ENCODE measurements at regions of chr7 and their contacts with region 1.

Region 1: DNA sequence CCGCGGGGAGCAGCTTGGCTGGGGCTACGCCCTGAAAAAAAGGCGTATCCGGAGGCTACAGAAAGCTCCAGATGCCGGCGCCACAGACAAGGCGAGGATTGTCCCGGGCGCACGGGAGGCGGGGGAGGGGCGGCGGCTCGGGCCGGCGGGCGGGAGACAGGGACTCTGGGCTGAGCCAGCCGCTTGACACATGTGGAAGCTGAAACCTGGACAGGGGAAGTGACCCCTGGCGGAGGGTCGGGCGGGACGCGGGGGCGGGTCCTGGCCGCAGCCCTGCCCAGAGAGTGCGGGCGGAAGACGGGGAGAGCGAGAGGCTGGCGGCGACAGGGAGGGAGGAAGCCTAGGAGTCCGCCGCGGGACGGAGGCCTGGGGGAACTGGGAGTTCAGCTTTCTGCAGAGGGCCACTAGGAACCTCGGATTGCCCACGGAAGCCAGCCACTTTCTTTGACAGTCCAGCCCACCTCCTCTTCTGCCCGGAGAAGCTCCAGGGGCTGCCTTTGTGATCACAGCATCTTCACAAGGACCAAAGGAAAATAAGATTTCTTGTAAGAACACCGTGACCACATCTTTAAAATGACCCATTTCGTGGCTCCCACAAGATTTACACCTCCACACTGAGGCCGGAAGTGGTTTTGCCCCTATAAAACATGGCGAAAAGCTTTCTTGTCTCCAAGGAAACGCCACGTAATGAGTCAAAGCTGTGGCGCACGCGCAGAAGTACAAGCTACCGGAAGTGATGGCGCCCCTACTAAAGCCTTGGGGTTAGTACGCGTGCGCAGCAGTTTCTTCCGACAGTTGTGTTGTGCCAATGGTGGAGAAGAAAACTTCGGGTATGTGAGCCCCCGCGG is at the starts of genes PLOD3 and ZNHIT1:
- DNase-seq: peak; percentile 93 to 99 (median 94)
- H3K4me3 ChIP-seq: peak within 1 kb of the TSS; percentile 82
- H3K4me3 Mint-ChIP-seq: peak within 1 kb of the TSS; percentile 90 to 98 (median 97)
- H3K27ac ChIP-seq: peak within 1 kb of the TSS; percentile 76
- H3K27ac Mint-ChIP-seq: peak within 1 kb of the TSS; percentile 95 to 97 (median 96)
- H3K4me1 ChIP-seq: peaks cover 25% of the 10 kb centered on the region
- H3K4me1 Mint-ChIP-seq: peaks cover 31 to 55% (median 50%) of the 10 kb centered on the region in 3 donors
- H3K27me3 ChIP-seq: no peaks in the 10 kb centered on the region
- H3K27me3 Mint-ChIP-seq: peaks cover 0 to 4% of the 10 kb centered on the region in 2 donors
- total RNA-seq, gene PLOD3: 41.3 to 45.4 TPM
- total RNA-seq, gene ZNHIT1: 50.6 to 51.7 TPM

Region 2: DNA sequence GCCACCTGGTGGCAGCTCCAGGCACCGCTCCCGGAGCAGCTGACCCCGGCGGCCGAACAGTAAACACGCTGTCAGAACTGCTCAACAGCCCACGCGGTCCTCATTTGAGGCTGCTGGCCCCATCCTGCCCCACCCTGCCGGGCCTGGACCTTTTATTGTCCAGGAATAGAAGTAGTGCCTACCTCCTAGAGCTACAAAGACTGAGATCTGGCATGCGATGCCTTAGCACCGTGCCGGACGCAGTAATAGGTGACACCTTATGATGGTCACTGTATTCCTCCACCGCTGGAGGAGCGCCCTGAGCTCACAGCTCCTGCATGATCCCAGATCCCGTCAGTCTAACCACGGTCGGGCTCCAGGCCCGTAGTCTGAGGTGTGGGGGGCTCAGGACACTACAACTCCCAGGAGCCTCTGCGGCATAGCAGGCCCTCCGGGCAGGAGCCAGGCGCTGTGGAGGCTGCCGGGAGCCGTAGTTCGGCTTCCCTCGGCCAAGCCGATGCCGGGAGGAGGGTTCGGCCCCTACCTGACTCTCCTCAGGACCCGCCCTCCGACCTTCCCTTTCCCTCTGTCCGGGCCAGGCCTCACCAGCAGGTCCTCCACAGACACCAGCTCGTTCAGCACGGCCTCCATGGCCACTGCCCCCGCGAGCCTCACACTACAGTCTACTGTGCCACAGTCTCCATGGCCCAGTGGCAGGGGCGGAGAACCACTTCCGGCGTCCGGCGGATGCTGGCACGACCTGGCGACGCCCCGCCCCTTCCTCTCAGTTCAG is 26.9 kb after region 1 on chr7 and contains the start of gene FIS1:
- CTCF ChIA-PET with region 1: interaction called, 69 read pairs
- POLR2A ChIA-PET with region 1: interaction called, 28 read pairs
- DNase-seq: peak; percentile 91 to 95 (median 92)
- H3K4me3 ChIP-seq: peak within 1 kb of the TSS; percentile 95
- H3K4me3 Mint-ChIP-seq: peak within 1 kb of the TSS; percentile 97 to 99 (median 98)
- H3K27ac ChIP-seq: peak within 1 kb of the TSS; percentile 91
- H3K27ac Mint-ChIP-seq: peak within 1 kb of the TSS; percentile 93 to 99 (median 97)
- H3K4me1 ChIP-seq: peaks cover 27% of the 10 kb centered on the region
- H3K4me1 Mint-ChIP-seq: peaks cover 30 to 60% (median 40%) of the 10 kb centered on the region in 3 donors
- H3K27me3 ChIP-seq: no peaks in the 10 kb centered on the region
- H3K27me3 Mint-ChIP-seq: peaks cover 0 to 2% of the 10 kb centered on the region in 2 donors
- total RNA-seq, gene FIS1: 137 to 139 TPM

Region 3: GRCh38 chr7:101251871-101252659 is 34.5 kb after region 1 on chr7:
- CTCF ChIA-PET with region 1: interaction called, 5 read pairs
- POLR2A ChIA-PET with region 1: interaction called, 12 read pairs
- DNase-seq: peak; percentile 97 to 99 (median 98)
- H3K4me3 ChIP-seq: peak overlapping the region; percentile 100
- H3K4me3 Mint-ChIP-seq: peak overlapping the region; percentile 95 to 100 (median 99)
- H3K27ac ChIP-seq: peak overlapping the region; percentile 80
- H3K27ac Mint-ChIP-seq: peak overlapping the region; percentile 88 to 100 (median 98)
- H3K4me1 ChIP-seq: peaks cover 16% of the 10 kb centered on the region
- H3K4me1 Mint-ChIP-seq: peaks cover 26 to 40% (median 35%) of the 10 kb centered on the region in 3 donors
- H3K27me3 ChIP-seq: no peaks in the 10 kb centered on the region
- H3K27me3 Mint-ChIP-seq: peaks cover 3 to 8% of the 10 kb centered on the region in 2 donors

Region 4: DNA sequence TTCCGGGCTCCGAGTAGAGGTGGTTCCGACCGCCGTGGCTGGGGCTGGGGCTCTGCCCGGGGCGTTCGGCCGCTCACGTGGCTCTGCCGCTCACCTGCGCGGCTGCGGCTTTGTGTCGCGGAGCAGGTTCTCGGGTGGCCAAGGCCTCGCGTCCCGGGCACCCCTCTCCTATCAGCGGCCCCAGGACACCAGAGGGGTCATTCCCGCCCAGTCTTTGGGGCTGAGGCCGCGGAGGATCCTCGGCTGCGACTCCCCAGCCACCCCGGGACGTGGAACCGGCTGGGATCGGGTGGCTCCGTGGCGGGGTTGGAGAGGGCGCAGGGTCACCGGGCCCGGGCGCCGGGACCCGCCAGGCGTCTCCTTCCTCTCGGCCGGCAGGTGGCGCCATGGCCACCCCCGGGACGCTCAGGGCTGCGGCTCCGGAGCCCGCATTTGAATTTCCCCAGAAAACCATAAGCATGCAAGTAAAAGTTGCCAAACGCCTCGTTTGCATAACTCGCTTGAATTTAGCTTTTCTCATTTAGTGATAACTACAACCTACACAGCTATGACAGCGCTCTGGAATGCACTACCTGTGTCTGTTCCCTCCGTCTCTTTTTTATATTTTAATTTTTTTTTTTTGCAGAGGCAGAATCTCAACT is 146.2 kb after region 1 on chr7:
- CTCF ChIA-PET with region 1: no interaction called
- POLR2A ChIA-PET with region 1: no interaction called
- DNase-seq: peak; percentile 36 to 70 (median 51)
- H3K4me3 ChIP-seq: peak overlapping the region; percentile 45
- H3K4me3 Mint-ChIP-seq: peak overlapping the region in 6 of 7 donors; percentile 41 to 79 (median 54)
- H3K27ac ChIP-seq: no peak overlapping the region
- H3K27ac Mint-ChIP-seq: no peak overlapping the region
- H3K4me1 ChIP-seq: no peaks in the 10 kb centered on the region
- H3K4me1 Mint-ChIP-seq: peaks cover 0 to 5% (median 3%) of the 10 kb centered on the region in 3 donors
- H3K27me3 ChIP-seq: peaks cover 15% of the 10 kb centered on the region
- H3K27me3 Mint-ChIP-seq: peaks cover 29 to 46% of the 10 kb centered on the region in 2 donors